Activated CD4-positive, alpha-beta T cell treated with anti-CD3 and anti-CD28 coated beads, Interleukin-2, amount 10 ng/mL, durations not matched to agents 24 days and 14 days (primary cell): ENCODE measurements at regions of chr13 and their contacts with region 1.

Region 1: DNA sequence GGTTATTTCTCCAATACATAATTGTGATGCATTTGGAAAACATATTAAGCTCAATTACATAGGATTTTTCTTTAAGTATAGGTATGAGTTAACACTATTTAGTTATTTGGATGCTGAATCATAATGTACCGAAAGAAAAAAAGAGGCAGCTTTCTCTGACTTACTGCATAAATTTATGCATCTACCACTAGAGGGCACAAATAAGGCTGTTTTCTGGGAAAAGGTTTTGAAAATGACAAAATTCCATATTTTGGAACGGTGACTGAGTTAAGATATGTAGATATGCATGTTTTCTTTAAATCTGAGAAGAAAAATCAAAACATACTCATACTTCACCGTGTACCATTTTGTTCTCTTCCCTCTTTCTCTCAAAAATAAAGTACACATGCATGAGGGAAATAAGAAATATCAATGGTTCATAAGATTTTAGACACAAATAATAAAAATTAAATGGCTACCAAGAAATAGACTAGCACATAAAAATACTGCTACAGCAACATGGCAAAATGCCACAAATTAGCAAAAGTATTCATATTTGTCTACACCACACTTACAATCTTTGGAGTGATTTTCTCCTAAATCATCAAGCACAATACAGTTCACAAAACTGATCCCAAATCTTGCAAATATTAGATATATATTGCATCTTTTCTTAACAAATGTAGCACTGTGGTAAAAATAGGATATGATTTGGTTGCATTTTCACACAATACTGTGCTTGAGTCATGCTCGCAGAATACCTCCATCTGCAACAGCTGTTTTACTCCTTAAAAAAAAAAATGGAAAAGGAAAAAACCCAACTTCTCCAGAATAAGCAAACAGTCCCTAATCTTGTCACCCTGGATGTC is 260.0 kb downstream of the FGF14 start:
- DNase-seq: no peak
- H3K4me3 Mint-ChIP-seq: no peak overlapping the region
- H3K27ac Mint-ChIP-seq: no peak overlapping the region
- H3K4me1 Mint-ChIP-seq: no peaks in the 10 kb centered on the region
- H3K27me3 Mint-ChIP-seq: peaks cover 2% of the 10 kb centered on the region

Region 2: DNA sequence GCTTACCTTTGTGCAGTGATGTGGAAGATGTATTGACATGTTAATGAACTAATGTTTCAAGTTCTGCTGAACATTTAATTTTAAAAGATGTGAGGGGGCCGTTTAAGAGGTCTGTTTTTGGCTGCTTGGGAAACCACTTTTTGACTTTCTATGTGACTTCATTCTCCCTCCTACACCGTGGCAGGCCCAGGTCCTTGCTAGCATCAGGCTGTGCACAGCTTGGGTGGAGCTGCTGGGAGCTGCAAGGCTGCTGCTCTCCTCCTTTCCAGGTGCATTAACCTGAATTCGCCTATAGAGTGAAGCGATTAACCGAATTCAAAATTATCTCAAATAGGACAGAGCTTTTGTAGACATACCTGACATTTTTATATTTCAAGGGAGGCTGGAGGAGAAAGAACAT is 10.9 kb after region 1 on chr13:
- intact Hi-C with region 1: no loop called
- DNase-seq: no peak
- H3K4me3 Mint-ChIP-seq: no peak overlapping the region
- H3K27ac Mint-ChIP-seq: no peak overlapping the region
- H3K4me1 Mint-ChIP-seq: no peaks in the 10 kb centered on the region
- H3K27me3 Mint-ChIP-seq: no peaks in the 10 kb centered on the region

Region 3: DNA sequence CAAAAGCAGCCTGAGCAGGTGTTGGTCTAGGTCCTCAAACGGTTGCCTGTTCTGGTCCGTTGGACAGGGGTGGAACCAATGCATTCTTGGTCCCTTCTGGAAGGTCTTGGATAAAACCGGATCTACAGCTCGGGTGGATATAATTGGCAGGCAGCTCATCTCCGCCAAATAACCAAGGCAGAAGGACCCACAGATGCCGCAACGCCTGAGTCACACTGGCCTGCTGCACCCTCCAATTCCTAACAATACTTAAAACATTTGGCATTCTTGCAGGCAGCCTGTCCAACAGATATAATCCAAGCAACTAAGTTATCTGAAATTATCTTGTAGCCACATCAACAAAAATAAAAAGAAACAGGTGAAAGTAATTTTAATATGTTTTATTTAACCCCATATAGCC is 319.0 kb after region 1 on chr13:
- intact Hi-C with region 1: loop called (anchors 1 kb)
- DNase-seq: no peak
- H3K4me3 Mint-ChIP-seq: no peak overlapping the region
- H3K27ac Mint-ChIP-seq: no peak overlapping the region
- H3K4me1 Mint-ChIP-seq: peaks cover 5% of the 10 kb centered on the region
- H3K27me3 Mint-ChIP-seq: peaks cover 8% of the 10 kb centered on the region